AG04450 (cell line): ENCODE measurements at regions of chr17 and their contacts with region 1.

Region 1: GRCh38 chr17:45341533-45342158 is 24.8 kb upstream of the MAP3K14 start:
- DNase-seq: peak; percentile 63
- H3K4me3 ChIP-seq: peak overlapping the region; percentile 31
- H3K27ac ChIP-seq: peak overlapping the region; percentile 73
- H3K27me3 ChIP-seq: no peaks in the 10 kb centered on the region
- CTCF ChIP-seq: no peak

Region 2: GRCh38 chr17:45371414-45372327 is 30.0 kb after region 1 on chr17:
- CTCF ChIA-PET with region 1: interaction called, 4 read pairs
- POLR2A ChIA-PET with region 1: interaction called, 32 read pairs
- DNase-seq: peak; percentile 93
- H3K4me3 ChIP-seq: peak overlapping the region; percentile 29; the same call in 1 of the 2 replicates
- H3K27ac ChIP-seq: peak overlapping the region; percentile 100
- H3K27me3 ChIP-seq: no peaks in the 10 kb centered on the region
- CTCF ChIP-seq: peak; percentile 16